RWPE1 (cell line): ENCODE measurements at regions of chr12 and their contacts with region 1.

Region 1: DNA sequence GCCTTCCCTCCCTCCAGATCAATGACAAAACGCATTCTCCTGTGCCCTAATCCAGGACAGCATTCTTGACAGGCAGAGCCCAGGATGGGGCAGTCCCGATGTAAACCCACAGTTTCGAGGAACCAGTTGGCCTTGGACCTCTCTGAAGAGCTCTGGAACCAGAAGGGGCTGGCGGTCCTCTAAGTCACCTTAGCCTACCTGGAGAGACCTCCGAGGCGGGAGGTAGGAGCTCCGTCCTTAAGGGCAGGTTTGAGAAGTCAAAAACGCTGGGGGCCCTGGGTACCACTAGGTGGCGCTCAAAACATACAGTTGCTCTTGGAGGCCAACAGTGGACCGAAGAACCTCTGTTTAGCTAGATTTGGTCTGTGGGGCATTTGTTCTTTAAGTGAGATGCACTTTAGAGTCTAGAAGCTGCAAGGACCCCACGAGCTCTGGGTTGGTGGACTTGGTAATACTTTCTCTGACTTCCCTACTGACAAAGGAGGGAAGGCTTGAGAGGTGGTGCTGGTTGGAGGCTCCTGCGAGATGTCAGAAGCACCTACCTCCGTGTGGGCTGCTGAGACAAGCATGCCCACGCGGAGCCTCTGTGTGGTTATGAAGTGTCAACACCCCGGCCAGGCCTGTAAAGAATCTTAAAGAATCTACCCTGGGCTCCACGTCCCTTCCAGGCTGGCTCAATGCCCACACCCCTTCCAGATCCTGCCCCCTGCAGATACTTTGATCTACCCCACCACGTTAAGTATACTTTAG is 74.8 kb upstream of the CHST11 start:
- DNase-seq: peak; percentile 75
- H3K27ac ChIP-seq: no peak overlapping the region
- CTCF ChIP-seq: peak; percentile 89

Region 2: DNA sequence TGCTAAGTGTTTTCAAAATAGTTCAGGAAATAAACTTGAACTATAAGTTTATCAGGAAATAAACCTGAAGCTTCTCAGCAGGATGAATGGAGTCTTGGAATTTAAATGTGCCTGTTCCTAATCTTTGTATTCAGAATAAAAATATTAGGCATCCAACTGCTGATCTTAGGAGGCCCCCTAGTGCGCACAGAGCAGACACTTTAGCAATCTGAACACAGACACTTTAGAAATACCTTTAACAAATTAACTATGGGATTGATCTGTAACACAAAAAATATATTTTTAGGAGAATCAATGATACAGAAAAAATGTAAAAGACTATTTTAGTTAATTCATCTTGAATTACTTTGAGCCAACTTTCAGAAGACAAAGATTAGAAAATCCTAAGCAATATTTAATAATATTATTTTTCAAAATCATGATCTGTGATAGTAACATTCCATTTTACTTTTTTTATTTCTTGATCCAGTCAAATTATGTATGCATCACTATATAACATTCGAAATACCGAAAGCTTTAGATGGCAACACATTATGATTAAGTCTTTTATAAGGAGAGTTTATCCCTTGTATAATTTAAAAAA is 495.3 kb after region 1 on chr12:
- CTCF ChIA-PET with region 1: interaction called, 14 read pairs
- POLR2A ChIA-PET with region 1: no interaction called
- DNase-seq: peak; percentile 43
- H3K27ac ChIP-seq: no peak overlapping the region
- CTCF ChIP-seq: peak; percentile 78

Region 3: DNA sequence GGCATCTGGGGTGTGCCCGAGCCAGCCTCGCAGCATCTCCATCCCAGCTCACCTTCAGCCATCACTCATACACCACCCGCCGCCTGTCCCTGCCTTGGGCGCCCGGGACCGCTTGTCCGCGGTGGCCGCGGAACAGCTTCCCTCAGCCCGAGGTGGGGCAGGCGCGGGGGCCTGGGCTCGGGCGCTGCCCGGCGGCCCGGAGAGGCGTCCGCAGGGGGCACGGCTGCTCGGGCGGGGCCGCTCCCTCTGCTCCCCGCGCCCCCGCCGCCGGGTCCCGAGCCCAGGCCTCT is 575.8 kb after region 1 on chr12:
- CTCF ChIA-PET with region 1: interaction called, 8 read pairs
- POLR2A ChIA-PET with region 1: interaction called, 10 read pairs
- DNase-seq: no peak
- H3K27ac ChIP-seq: no peak overlapping the region
- CTCF ChIP-seq: no peak

Region 4: DNA sequence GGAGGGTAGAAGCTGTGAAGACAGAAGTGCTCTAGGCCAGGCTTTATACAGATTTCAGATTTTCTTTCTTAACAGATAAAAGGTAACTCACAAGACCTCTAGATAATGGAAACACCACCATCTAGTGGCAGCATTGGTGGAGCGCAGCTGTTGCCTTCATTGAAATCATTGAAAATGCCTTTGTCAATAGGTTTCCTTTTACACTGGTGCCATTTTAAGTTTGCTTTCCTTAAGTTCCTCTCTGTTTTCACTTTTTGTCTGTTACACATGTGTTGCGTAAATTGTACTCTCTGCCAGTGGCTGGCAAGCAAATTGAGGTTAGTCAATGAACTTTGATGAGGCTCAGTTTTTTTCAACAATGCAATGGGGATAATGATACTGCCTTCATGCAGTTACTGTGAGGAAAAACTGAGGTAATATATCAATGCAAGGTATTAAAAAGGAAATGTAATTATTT is 671.2 kb after region 1 on chr12:
- CTCF ChIA-PET with region 1: interaction called, 13 read pairs
- POLR2A ChIA-PET with region 1: no interaction called
- DNase-seq: peak; percentile 60
- H3K27ac ChIP-seq: no peak overlapping the region
- CTCF ChIP-seq: peak; percentile 90